Dendritic cell treated with granulocyte-macrophage colony-stimulating factor and Interleukin-4, amounts not matched to agents 40 ng/mL and 50 ng/mL, for 4 days (primary cell): ENCODE measurements at regions of chr15 and their contacts with region 1.

Region 1: GRCh38 chr15:88620995-88621772 is at the start of gene AEN:
- H3K4me3 Mint-ChIP-seq: peak within 1 kb of the TSS; percentile 79
- H3K27ac Mint-ChIP-seq: peak within 1 kb of the TSS; percentile 85
- H3K4me1 Mint-ChIP-seq: peaks cover 33% of the 10 kb centered on the region
- H3K27me3 Mint-ChIP-seq: no peaks in the 10 kb centered on the region

Region 2: GRCh38 chr15:88467073-88467934 is 153.9 kb before region 1 on chr15 and contains the starts of genes MRPL46 and MRPS11:
- intact Hi-C with region 1: loop called (anchors 5 kb)
- H3K4me3 Mint-ChIP-seq: peak within 1 kb of the TSS; percentile 89
- H3K27ac Mint-ChIP-seq: peak within 1 kb of the TSS; percentile 95
- H3K4me1 Mint-ChIP-seq: peaks cover 23% of the 10 kb centered on the region
- H3K27me3 Mint-ChIP-seq: no peaks in the 10 kb centered on the region

Region 3: GRCh38 chr15:88546248-88547129 is 74.7 kb before region 1 on chr15 and contains the start of gene DET1:
- intact Hi-C with region 1: loop called (anchors 5 kb)
- H3K4me3 Mint-ChIP-seq: peak within 1 kb of the TSS; percentile 80
- H3K27ac Mint-ChIP-seq: peak within 1 kb of the TSS; percentile 83
- H3K4me1 Mint-ChIP-seq: no peaks in the 10 kb centered on the region
- H3K27me3 Mint-ChIP-seq: no peaks in the 10 kb centered on the region

Region 4: GRCh38 chr15:88605189-88606069 is 15.8 kb before region 1 on chr15:
- intact Hi-C with region 1: no loop called
- H3K4me3 Mint-ChIP-seq: no peak overlapping the region
- H3K27ac Mint-ChIP-seq: no peak overlapping the region
- H3K4me1 Mint-ChIP-seq: peaks cover 9% of the 10 kb centered on the region
- H3K27me3 Mint-ChIP-seq: peaks cover 67% of the 10 kb centered on the region

Region 5: DNA sequence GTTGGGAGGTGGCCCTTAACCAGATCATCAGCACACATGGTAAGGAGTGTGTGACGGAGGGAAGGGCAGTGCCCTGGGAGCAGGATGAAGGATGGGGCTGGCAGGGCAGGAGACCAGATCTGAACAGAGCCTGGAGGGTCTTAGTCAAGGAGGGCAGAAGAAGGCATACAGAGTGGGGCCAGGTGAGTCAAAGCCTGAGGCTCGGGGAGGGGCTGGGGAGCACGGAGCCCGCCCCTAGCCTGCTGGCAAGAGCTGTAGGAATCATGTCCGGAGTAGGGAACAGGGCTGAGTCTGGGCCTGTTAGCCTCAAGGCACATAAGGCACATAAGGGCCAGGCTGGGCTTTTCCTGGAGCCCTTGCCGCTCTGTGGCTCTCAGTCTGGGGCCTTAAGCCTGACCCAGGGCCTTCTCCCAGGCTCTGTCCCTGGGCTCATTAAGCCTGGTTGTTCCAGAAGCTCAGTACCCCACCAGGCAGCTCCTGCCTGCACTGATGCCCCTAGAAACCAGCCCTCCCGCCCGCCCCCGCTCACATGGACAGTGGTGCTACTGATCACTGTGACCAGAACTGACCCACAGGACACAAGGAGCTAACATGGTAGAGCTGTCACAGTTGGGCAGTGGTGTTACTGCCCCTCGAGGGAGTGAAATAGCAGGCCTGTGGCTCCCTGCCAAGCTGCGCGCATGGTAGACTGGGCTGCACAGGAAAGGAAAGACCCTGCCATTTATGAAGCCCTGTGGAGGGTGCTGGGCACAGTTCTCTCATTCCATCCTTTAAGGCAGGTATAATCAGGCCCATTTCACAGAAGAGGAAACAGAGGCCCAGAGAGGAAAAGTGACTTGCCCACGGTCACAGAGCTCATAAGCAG is 32.2 kb after region 1 on chr15:
- intact Hi-C with region 1: no loop called
- H3K4me3 Mint-ChIP-seq: no peak overlapping the region
- H3K27ac Mint-ChIP-seq: no peak overlapping the region
- H3K4me1 Mint-ChIP-seq: peaks cover 13% of the 10 kb centered on the region
- H3K27me3 Mint-ChIP-seq: no peaks in the 10 kb centered on the region

Region 6: DNA sequence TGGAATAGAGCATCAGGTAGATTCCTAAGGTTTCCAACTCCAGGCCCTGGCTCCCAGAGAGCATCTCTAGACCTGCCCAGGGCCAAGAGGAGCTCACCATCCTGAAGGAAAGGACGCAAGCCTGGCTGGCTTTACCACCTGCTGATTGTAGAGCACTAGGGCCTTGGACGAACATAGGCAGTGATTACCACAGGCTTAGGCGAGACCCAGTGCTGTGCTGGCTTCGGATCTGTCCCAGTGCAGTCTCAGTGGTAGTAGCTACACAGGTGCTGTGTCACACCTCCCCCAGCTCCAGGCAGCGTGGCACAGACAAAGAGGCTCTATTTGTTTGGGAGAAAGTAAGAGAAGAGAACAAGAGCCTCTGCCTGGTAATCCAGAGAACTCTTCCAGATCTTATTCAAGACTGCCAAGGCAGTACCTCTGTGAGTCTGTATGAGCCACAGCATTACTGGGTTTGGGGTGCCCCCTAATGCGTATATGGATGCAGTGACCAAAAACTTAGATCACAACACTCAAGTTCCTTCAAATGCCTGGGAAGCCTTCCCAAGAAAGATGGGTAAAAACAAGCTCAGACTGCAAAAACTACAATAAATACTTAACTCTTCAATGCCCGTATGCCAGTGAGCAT is 43.1 kb after region 1 on chr15:
- intact Hi-C with region 1: loop called (anchors 5 kb)
- H3K4me3 Mint-ChIP-seq: no peak overlapping the region
- H3K27ac Mint-ChIP-seq: no peak overlapping the region
- H3K4me1 Mint-ChIP-seq: no peaks in the 10 kb centered on the region
- H3K27me3 Mint-ChIP-seq: peaks cover 7% of the 10 kb centered on the region

Region 7: GRCh38 chr15:88681610-88682221 is 60.5 kb after region 1 on chr15:
- intact Hi-C with region 1: no loop called
- H3K4me3 Mint-ChIP-seq: no peak overlapping the region
- H3K27ac Mint-ChIP-seq: no peak overlapping the region
- H3K4me1 Mint-ChIP-seq: no peaks in the 10 kb centered on the region
- H3K27me3 Mint-ChIP-seq: peaks cover 8% of the 10 kb centered on the region

Region 8: GRCh38 chr15:88834211-88834812 is 213.1 kb after region 1 on chr15:
- intact Hi-C with region 1: loop called (anchors 10 kb)
- H3K4me3 Mint-ChIP-seq: no peak overlapping the region
- H3K27ac Mint-ChIP-seq: no peak overlapping the region
- H3K4me1 Mint-ChIP-seq: no peaks in the 10 kb centered on the region
- H3K27me3 Mint-ChIP-seq: no peaks in the 10 kb centered on the region